K562 (cell line): ENCODE measurements at regions of chr6 and their contacts with region 1.

Region 1: GRCh38 chr6:157756708-157757429 is 66.2 kb upstream of the SNX9 start:
- DNase-seq: peak; percentile 75 to 89 (median 78)
- ATAC-seq: peak; percentile 81
- H3K4me3 ChIP-seq: no peak overlapping the region
- H3K27ac ChIP-seq: peak overlapping the region; percentile 34; the same call in 2 of the 3 replicates
- H3K4me1 ChIP-seq: peaks cover 31 to 55% of the 10 kb centered on the region in 2 experiments
- H3K27me3 ChIP-seq: no peaks in the 10 kb centered on the region
- CTCF ChIP-seq: peak; percentile 97 to 99 (median 97)
- EP300 ChIP-seq: 0 out of 2 replicates have a peak, but pooled peaks have one; percentile 8
- POLR2A ChIP-seq: no peak
- RAD21 ChIP-seq: peak; percentile 82 to 89

Region 2: DNA sequence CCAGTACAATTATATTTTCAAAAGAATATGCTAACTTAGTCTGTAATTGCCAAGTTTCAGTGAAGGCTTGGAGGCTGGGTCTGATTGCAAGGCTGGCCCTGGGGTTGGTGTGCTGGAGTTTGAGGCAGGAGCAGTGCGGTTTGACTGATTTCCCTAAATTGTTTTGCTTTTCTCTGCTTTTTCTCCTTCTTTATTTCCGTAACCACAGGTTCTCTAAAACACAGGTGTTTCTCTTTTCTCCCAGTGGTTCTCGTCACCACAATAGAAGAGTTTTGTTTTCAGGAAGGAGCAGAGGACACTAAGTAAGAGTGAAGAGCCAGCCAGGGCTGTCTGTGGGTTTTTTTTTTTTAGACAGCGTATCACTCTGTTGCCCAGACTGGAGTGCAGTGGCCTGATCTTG is 58.0 kb after region 1 on chr6:
- CTCF ChIA-PET with region 1: no interaction called
- POLR2A ChIA-PET with region 1: no interaction called
- in situ Hi-C with region 1: loop called (anchors 5 kb)
- intact Hi-C with region 1: no loop called
- DNase-seq: no peak
- ATAC-seq: no peak
- H3K4me3 ChIP-seq: no peak overlapping the region
- H3K27ac ChIP-seq: no peak overlapping the region
- H3K4me1 ChIP-seq: peaks cover 29 to 56% of the 10 kb centered on the region in 2 experiments
- H3K27me3 ChIP-seq: no peaks in the 10 kb centered on the region
- CTCF ChIP-seq: no peak
- EP300 ChIP-seq: no peak
- POLR2A ChIP-seq: no peak
- RAD21 ChIP-seq: no peak

Region 3: DNA sequence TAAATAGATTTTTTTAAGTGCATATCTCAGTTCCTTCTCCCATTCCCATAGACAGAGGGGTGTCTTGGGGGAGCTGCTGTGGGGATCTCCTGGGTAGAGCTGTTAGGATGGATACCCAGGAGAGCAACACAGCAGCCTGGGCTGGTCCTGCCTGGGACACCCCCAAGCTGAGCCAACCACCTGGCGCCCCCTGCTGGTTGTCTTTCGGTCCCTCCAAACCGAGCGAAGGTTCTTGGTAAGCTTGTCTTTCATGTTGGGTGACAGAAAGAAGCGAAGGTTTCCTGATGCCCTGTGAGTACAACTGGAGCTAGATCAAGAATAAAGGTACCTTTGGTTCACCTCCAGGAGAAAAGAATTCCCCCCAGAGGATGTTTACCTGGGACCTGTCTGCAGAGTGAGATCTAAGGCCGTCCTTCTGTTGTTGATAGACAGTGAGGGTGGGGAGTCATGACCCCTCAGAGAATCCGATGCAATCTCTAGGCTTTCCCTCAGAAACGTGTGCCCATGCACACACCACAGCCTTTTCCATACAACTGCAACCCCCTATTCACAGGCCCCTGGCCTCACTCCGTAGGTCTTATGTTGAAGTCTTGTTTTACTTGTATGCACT is 117.0 kb after region 1 on chr6:
- CTCF ChIA-PET with region 1: interaction called, 11 read pairs
- POLR2A ChIA-PET with region 1: interaction called, 3 read pairs
- in situ Hi-C with region 1: loop called (anchors 5 kb)
- intact Hi-C with region 1: loop called (anchors 1 kb)
- DNase-seq: peak; percentile 78 to 91 (median 82)
- ATAC-seq: peak; percentile 98
- H3K4me3 ChIP-seq: no peak overlapping the region
- H3K27ac ChIP-seq: no peak overlapping the region
- H3K4me1 ChIP-seq: no peaks in the 10 kb centered on the region
- H3K27me3 ChIP-seq: no peaks in the 10 kb centered on the region
- CTCF ChIP-seq: peak; percentile 91 to 97 (median 92)
- EP300 ChIP-seq: 0 out of 2 replicates have a peak, but pooled peaks have one; percentile 7
- POLR2A ChIP-seq: 0 out of 2 replicates have a peak, but pooled peaks have one; percentile 9
- RAD21 ChIP-seq: peak; percentile 95 to 97

Region 4: GRCh38 chr6:157946865-157947532 is 190.1 kb after region 1 on chr6:
- CTCF ChIA-PET with region 1: no interaction called
- POLR2A ChIA-PET with region 1: no interaction called
- in situ Hi-C with region 1: no loop called
- intact Hi-C with region 1: loop called (anchors 1 kb)
- DNase-seq: peak in 2 of 4 experiments; percentile 59 to 64
- ATAC-seq: peak; percentile 92
- H3K4me3 ChIP-seq: no peak overlapping the region
- H3K27ac ChIP-seq: no peak overlapping the region
- H3K4me1 ChIP-seq: peaks cover 0 to 6% of the 10 kb centered on the region in 2 experiments; a peak in 3 of 5 replicates
- H3K27me3 ChIP-seq: 0 out of 5 replicates have a peak, but pooled peaks cover 2 to 4% of the 10 kb centered on the region in 2 experiments
- CTCF ChIP-seq: peak; percentile 73 to 84 (median 78)
- EP300 ChIP-seq: no peak
- POLR2A ChIP-seq: peak; percentile 54
- RAD21 ChIP-seq: peak; percentile 80 to 90

Region 5: GRCh38 chr6:157985378-157986155 is 228.7 kb after region 1 on chr6:
- CTCF ChIA-PET with region 1: no interaction called
- POLR2A ChIA-PET with region 1: no interaction called
- in situ Hi-C with region 1: no loop called
- intact Hi-C with region 1: no loop called
- DNase-seq: no peak
- ATAC-seq: no peak
- H3K4me3 ChIP-seq: no peak overlapping the region
- H3K27ac ChIP-seq: no peak overlapping the region
- H3K4me1 ChIP-seq: peaks cover 29 to 40% of the 10 kb centered on the region in 2 experiments
- H3K27me3 ChIP-seq: no peaks in the 10 kb centered on the region
- CTCF ChIP-seq: no peak
- EP300 ChIP-seq: no peak
- POLR2A ChIP-seq: no peak
- RAD21 ChIP-seq: no peak

Region 6: GRCh38 chr6:158072083-158072721 is 315.3 kb after region 1 on chr6:
- CTCF ChIA-PET with region 1: no interaction called
- POLR2A ChIA-PET with region 1: no interaction called
- in situ Hi-C with region 1: no loop called
- intact Hi-C with region 1: loop called (anchors 2 kb)
- DNase-seq: peak; percentile 84 to 87 (median 86)
- ATAC-seq: peak; percentile 95
- H3K4me3 ChIP-seq: no peak overlapping the region
- H3K27ac ChIP-seq: no peak overlapping the region; the same call in 2 of the 3 replicates
- H3K4me1 ChIP-seq: peaks cover 4 to 15% of the 10 kb centered on the region in 2 experiments; a peak in 4 of 5 replicates
- H3K27me3 ChIP-seq: no peaks in the 10 kb centered on the region
- CTCF ChIP-seq: peak; percentile 86 to 98 (median 96)
- EP300 ChIP-seq: peak; percentile 48; the same call in 1 of the 2 replicates
- POLR2A ChIP-seq: no peak
- RAD21 ChIP-seq: peak; percentile 96 to 98